ENCODE measurements at regions of chr13 and their contacts with region 1.

Region 1: DNA sequence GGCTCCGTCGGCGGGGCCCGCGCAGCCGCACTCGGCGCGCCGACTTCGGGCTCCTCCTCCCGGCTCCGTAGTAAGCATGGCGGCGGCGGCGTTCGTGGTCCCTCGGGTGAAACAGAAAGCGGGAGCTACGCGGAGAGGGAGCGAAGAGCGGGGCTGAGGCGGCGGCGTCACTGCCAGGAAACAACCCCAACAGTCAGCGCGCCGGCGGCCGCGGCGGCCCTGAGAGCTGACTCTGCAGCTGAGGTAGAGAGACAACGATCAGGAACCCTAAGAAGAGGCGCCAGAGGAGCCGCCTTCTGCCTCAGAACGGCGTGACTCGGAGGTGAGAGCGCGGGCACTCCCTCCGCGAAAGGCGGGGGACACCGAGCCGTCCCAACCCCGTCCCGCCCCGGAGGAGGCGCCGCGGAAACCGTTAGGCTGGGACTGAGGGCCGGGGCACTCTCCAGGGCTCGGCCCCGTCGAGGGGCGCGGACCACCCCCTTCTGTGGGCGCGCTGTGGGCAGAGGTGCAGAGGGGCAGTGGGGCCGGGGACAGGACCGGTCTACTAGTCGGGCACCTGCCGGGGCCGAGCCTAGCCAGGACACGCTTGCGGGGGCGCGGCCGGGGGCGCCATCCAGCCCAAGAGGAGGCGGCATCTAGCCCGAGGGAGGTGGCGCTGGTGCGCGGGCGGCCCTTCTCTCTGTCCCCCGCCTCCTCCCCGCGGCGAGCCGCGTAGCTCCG is at the start of gene FNDC3A:
- DNase-seq: peak; percentile 86
- H3K4me3 Mint-ChIP-seq: peak within 1 kb of the TSS; percentile 94
- H3K27ac Mint-ChIP-seq: peak within 1 kb of the TSS; percentile 100
- H3K4me1 Mint-ChIP-seq: peaks cover 43% of the 10 kb centered on the region
- H3K27me3 Mint-ChIP-seq: peaks cover 2% of the 10 kb centered on the region
- total RNA-seq, gene FNDC3A: 26.9 and 27.0 TPM in 2 replicates

Region 2: DNA sequence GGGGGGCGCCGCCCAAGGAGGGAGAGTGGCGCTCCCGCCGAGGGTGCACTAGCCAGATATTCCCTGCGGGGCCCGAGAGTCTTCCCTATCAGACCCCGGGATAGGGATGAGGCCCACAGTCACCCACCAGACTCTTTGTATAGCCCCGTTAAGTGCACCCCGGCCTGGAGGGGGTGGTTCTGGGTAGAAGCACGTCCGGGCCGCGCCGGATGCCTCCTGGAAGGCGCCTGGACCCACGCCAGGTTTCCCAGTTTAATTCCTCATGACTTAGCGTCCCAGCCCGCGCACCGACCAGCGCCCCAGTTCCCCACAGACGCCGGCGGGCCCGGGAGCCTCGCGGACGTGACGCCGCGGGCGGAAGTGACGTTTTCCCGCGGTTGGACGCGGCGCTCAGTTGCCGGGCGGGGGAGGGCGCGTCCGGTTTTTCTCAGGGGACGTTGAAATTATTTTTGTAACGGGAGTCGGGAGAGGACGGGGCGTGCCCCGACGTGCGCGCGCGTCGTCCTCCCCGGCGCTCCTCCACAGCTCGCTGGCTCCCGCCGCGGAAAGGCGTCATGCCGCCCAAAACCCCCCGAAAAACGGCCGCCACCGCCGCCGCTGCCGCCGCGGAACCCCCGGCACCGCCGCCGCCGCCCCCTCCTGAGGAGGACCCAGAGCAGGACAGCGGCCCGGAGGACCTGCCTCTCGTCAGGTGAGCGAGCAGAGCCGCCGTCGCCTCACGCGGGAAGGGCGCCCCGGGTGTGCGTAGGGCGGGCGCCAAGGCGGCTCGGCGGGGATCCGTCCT is 672.5 kb before region 1 on chr13 and contains the start of gene RB1:
- intact Hi-C with region 1: loop called (anchors 5 kb)
- DNase-seq: peak; percentile 88
- H3K4me3 Mint-ChIP-seq: peak within 1 kb of the TSS; percentile 99
- H3K27ac Mint-ChIP-seq: peak within 1 kb of the TSS; percentile 97
- H3K4me1 Mint-ChIP-seq: peaks cover 30% of the 10 kb centered on the region
- H3K27me3 Mint-ChIP-seq: no peaks in the 10 kb centered on the region
- total RNA-seq, gene RB1: 26.5 and 28.6 TPM in 2 replicates

Region 3: GRCh38 chr13:48653472-48653939 is 322.5 kb before region 1 on chr13 and contains the start of gene CYSLTR2:
- intact Hi-C with region 1: loop called (anchors 10 kb)
- DNase-seq: peak; percentile 27
- H3K4me3 Mint-ChIP-seq: peak within 1 kb of the TSS; percentile 78
- H3K27ac Mint-ChIP-seq: peak within 1 kb of the TSS; percentile 83
- H3K4me1 Mint-ChIP-seq: peaks cover 26% of the 10 kb centered on the region
- H3K27me3 Mint-ChIP-seq: no peaks in the 10 kb centered on the region
- total RNA-seq, gene CYSLTR2: 0.75 and 0.78 TPM in 2 replicates

Region 4: GRCh38 chr13:48828962-48829421 is 147.0 kb before region 1 on chr13:
- intact Hi-C with region 1: loop called (anchors 2 kb)
- DNase-seq: no peak
- H3K4me3 Mint-ChIP-seq: no peak overlapping the region
- H3K27ac Mint-ChIP-seq: peak overlapping the region; percentile 42
- H3K4me1 Mint-ChIP-seq: peaks cover 46% of the 10 kb centered on the region
- H3K27me3 Mint-ChIP-seq: peaks cover 3% of the 10 kb centered on the region

Region 5: GRCh38 chr13:48892053-48892690 is 83.8 kb before region 1 on chr13:
- intact Hi-C with region 1: loop called (anchors 1 kb)
- DNase-seq: no peak
- H3K4me3 Mint-ChIP-seq: peak overlapping the region; percentile 51
- H3K27ac Mint-ChIP-seq: peak overlapping the region; percentile 83
- H3K4me1 Mint-ChIP-seq: peaks cover 27% of the 10 kb centered on the region
- H3K27me3 Mint-ChIP-seq: no peaks in the 10 kb centered on the region

Region 6: GRCh38 chr13:49247643-49248621 is 271.9 kb after region 1 on chr13 and contains the start of gene CDADC1:
- intact Hi-C with region 1: loop called (anchors 2 kb)
- DNase-seq: peak; percentile 90
- H3K4me3 Mint-ChIP-seq: peak within 1 kb of the TSS; percentile 97
- H3K27ac Mint-ChIP-seq: peak within 1 kb of the TSS; percentile 97
- H3K4me1 Mint-ChIP-seq: peaks cover 40% of the 10 kb centered on the region
- H3K27me3 Mint-ChIP-seq: peaks cover 14% of the 10 kb centered on the region
- total RNA-seq, gene CDADC1: 8.1 and 9.5 TPM in 2 replicates

Region 7: GRCh38 chr13:49569956-49570689 is 594.1 kb after region 1 on chr13:
- intact Hi-C with region 1: no loop called
- DNase-seq: no peak
- H3K4me3 Mint-ChIP-seq: no peak overlapping the region
- H3K27ac Mint-ChIP-seq: peak overlapping the region; percentile 62
- H3K4me1 Mint-ChIP-seq: peaks cover 14% of the 10 kb centered on the region
- H3K27me3 Mint-ChIP-seq: no peaks in the 10 kb centered on the region